ENCODE measurements at regions of chr6 and their contacts with region 1.

Region 1: DNA sequence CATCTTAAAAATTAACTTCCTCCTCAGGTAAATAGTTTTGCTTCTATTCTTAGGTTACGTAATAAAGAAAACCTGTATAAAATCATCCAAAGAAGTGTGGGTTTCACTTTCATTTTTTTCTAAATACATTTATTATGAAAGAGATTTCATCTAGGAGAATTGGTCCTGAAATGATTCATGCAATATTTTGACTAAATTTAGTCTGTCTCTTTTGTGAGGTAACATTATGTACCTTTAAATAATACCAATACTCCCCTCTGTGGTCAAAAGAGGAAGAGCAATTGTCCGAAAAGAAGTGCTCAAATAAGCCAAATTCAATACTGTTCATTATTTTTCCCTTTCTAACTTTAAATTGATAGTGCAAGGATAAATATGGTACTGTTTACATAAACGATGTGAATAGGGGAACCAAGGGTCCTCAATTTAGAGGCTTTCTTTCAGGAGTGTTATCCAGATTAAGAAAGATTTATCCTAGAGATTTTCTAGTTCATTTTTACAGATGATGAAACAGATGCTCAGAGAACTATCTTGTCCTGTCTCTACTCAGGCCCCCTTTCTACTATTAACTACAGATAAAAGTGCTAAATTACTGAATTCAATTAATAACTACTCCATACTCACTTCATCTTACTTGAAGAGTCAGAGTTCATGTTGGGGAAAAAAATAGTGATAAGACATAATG is 26.2 kb downstream of the CYP39A1 start:
- DNase-seq: no peak
- H3K4me3 Mint-ChIP-seq: no peak overlapping the region
- H3K27ac Mint-ChIP-seq: no peak overlapping the region
- H3K4me1 Mint-ChIP-seq: peaks cover 10% of the 10 kb centered on the region
- H3K27me3 Mint-ChIP-seq: peaks cover 9% of the 10 kb centered on the region

Region 2: DNA sequence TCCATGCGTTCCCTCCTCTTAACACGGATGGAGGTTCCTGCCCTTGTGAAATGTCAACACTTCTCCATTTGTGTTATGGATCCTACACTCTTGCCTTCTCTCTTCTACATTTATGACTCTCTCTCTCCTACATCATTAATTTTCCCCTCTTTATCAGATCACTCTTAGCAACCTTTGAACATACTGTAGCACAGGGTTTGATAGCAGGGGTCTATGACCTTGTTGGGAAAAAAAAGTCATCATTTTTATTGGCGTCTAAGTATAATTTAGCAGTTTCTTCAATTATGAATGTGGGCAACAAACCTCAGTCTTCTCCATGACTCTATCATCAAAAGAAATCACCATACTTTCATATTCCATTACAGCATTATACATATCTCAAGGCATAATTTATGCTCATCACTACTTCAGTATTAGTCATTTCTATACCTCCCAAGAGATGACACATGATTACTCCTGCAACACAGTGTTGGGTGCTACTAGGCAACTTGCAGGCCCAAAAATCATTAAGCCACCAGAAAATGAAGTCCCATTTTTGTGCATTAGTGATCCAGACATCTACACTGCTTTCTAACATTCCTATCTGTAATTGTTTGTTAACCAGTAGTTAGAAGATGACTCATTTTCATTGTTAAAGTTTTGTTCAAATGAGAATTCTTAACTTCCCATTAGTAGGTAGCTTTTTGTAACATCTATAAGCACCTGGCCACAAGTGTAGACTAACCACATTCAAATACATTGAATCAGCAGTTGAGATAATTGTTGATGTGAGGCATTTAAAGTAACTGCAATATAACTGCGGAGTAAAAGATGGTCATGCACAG is 16.8 kb after region 1 on chr6:
- CTCF ChIA-PET with region 1: no interaction called
- POLR2A ChIA-PET with region 1: no interaction called
- intact Hi-C with region 1: loop called (anchors 1 kb)
- DNase-seq: no peak
- H3K4me3 Mint-ChIP-seq: no peak overlapping the region
- H3K27ac Mint-ChIP-seq: no peak overlapping the region
- H3K4me1 Mint-ChIP-seq: peaks cover 11% of the 10 kb centered on the region
- H3K27me3 Mint-ChIP-seq: peaks cover 14% of the 10 kb centered on the region